ENCODE measurements at regions of chr16 and their contacts with region 1.

Region 1: GRCh38 chr16:53435066-53435688 is 906 bp downstream of the RBL2 start:
- DNase-seq: peak; percentile 39 to 90 (median 71)
- ATAC-seq: peak; percentile 59
- H3K4me3 ChIP-seq: peak overlapping the region; percentile 93 to 100
- H3K4me3 Mint-ChIP-seq: peak overlapping the region; percentile 94
- H3K27ac ChIP-seq: peak overlapping the region; percentile 92 to 94
- H3K27ac Mint-ChIP-seq: peak overlapping the region; percentile 99
- H3K4me1 ChIP-seq: peaks cover 36% of the 10 kb centered on the region
- H3K4me1 Mint-ChIP-seq: peaks cover 47% of the 10 kb centered on the region
- H3K27me3 ChIP-seq: no peaks in the 10 kb centered on the region
- H3K27me3 Mint-ChIP-seq: no peaks in the 10 kb centered on the region
- CTCF ChIP-seq: no peak

Region 2: DNA sequence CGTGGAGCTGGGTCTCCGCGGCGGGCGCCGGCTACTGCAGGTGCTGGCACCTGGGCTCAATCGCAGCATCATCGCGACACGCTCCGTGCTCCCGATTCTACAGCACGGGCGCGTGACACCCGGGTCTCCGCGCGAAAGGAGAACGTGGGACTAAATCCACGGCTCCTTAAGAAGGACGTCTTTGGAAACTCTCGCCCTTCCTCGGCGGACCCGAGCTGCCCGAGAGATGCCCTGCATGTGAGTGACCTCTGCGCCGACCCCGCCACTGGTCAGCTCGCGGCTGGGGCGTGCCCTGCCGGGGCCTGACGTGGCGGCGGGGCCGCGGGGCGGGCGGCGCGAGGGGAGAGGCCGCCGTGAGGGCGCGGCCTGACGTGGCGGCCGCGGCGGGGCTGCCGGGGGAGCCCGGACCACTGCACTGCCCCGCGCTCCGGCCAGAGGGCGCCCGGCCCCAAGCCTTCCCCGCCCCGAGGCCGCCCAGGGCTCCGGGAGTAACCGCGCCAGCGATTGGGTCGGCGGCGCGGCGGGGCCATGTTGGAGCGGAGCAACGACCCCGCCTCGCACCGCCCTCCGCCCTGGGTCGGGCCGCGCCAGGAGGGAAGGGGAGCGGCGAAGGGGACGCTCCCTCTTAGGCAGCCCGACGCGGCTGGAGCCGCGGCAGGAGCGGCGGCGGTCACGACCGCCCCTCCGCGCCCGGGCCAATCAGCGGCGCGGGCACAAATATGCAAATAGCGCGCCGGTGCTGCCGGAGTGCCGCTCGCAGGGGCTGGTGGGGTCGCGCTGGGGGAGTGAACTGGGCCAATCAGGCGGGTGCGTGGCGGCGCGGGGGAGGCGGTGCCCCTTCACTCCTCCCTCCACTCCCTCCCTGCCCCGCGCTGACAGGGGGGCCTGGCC is 304.8 kb before region 1 on chr16:
- CTCF ChIA-PET with region 1: no interaction called
- POLR2A ChIA-PET with region 1: no interaction called
- intact Hi-C with region 1: loop called (anchors 1 to 2 kb)
- DNase-seq: peak; percentile 88 to 97 (median 96)
- ATAC-seq: peak; percentile 91
- H3K4me3 ChIP-seq: peak overlapping the region; percentile 76 to 92
- H3K4me3 Mint-ChIP-seq: peak overlapping the region; percentile 84
- H3K27ac ChIP-seq: peak overlapping the region; percentile 52 to 66
- H3K27ac Mint-ChIP-seq: peak overlapping the region; percentile 86
- H3K4me1 ChIP-seq: no peaks in the 10 kb centered on the region
- H3K4me1 Mint-ChIP-seq: peaks cover 20% of the 10 kb centered on the region
- H3K27me3 ChIP-seq: no peaks in the 10 kb centered on the region
- H3K27me3 Mint-ChIP-seq: no peaks in the 10 kb centered on the region
- CTCF ChIP-seq: no peak

Region 3: DNA sequence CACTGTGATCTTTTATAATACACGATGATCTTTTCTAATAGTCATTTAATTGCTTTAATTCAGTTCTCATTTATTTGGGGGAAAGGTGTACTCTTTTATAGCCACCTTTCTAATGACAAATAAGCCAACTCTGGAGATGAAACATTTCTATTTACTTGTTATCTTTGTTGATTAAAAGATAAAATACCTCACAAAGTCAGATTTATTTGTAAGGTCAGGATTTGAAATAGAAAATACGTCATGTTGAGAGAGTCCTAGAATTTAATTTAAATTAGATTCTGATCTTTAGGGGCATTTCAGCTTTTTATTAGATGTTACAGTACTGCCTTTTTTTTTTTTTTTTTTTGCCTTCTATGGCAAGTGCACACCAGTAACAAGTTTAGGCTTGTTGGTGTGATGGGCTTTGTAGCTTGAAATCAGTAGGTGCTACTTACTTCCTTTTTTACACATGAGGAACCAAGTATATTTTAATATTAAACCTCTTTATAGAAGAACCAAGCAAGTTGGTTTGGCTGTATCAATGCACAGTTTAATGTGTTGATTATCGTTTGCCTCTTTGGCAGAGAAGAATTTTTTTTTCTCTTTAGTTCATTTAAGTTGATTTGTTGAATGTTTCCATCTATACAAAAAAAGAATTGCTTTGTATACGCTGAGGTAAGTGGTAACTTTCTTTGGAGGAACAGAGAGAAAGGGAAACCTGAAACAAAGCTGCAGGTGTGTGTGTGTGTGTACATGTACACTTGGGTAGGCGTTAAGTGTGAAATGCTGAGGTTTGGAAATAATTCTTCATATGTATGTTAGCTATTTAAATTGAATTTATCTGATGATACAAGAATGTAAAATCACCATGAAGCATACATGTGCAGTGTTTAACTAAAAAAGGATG is 14.7 kb after region 1 on chr16:
- CTCF ChIA-PET with region 1: interaction called, 28 read pairs
- POLR2A ChIA-PET with region 1: interaction called, 139 read pairs
- intact Hi-C with region 1: no loop called
- DNase-seq: peak in 2 of 9 experiments; percentile 22 to 47
- ATAC-seq: peak; percentile 39
- H3K4me3 ChIP-seq: peak overlapping the region; percentile 38 to 44
- H3K4me3 Mint-ChIP-seq: peak overlapping the region; percentile 88
- H3K27ac ChIP-seq: peak overlapping the region; percentile 33 to 45
- H3K27ac Mint-ChIP-seq: peak overlapping the region; percentile 90
- H3K4me1 ChIP-seq: peaks cover 64% of the 10 kb centered on the region
- H3K4me1 Mint-ChIP-seq: peaks cover 76% of the 10 kb centered on the region
- H3K27me3 ChIP-seq: no peaks in the 10 kb centered on the region
- H3K27me3 Mint-ChIP-seq: no peaks in the 10 kb centered on the region
- CTCF ChIP-seq: no peak

Region 4: DNA sequence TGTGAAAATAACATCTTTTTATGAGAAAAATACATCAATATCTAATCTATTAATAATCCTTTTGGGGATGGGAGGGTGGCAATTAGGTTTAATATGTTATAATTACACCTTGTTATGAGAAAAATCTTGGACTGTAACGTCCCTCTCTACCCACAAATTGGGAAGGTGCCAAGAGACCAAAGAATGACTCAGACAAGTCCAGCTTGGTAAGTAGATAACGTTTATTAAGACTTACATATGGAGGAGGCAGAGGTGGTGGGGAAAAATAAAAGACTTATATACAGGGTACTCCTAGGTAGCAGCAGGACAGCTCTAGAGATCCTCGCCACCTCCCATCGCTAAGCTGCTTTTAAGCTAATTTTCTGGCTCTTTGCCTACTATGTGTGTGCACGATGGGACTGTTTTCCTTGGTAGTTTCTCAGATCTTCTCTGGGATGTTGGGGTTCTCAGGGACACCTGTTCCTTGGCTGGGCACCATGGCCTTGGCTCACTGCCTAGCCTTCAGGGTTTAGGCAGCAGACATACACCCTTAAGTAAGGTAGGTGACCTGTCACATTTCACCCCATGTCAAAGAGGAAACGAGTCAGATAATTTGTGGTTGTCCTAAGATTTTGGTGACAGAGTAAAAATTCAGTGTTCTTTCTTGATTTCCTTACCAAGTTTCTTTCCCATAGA is 30.6 kb after region 1 on chr16:
- CTCF ChIA-PET with region 1: no interaction called
- POLR2A ChIA-PET with region 1: interaction called, 5 read pairs
- intact Hi-C with region 1: loop called (anchors 5 kb)
- DNase-seq: no peak
- ATAC-seq: no peak
- H3K4me3 ChIP-seq: no peak overlapping the region
- H3K4me3 Mint-ChIP-seq: peak overlapping the region; percentile 37
- H3K27ac ChIP-seq: peak overlapping the region in 1 of 2 experiments; percentile 21
- H3K27ac Mint-ChIP-seq: peak overlapping the region; percentile 88
- H3K4me1 ChIP-seq: peaks cover 56% of the 10 kb centered on the region
- H3K4me1 Mint-ChIP-seq: peaks cover 69% of the 10 kb centered on the region
- H3K27me3 ChIP-seq: no peaks in the 10 kb centered on the region
- H3K27me3 Mint-ChIP-seq: no peaks in the 10 kb centered on the region
- CTCF ChIP-seq: no peak

Region 5: GRCh38 chr16:53495325-53495724 is 60.1 kb after region 1 on chr16:
- CTCF ChIA-PET with region 1: interaction called, 3 read pairs
- POLR2A ChIA-PET with region 1: interaction called, 26 read pairs
- intact Hi-C with region 1: no loop called
- DNase-seq: no peak
- ATAC-seq: no peak
- H3K4me3 ChIP-seq: no peak overlapping the region
- H3K4me3 Mint-ChIP-seq: no peak overlapping the region
- H3K27ac ChIP-seq: no peak overlapping the region
- H3K27ac Mint-ChIP-seq: peak overlapping the region; percentile 71
- H3K4me1 ChIP-seq: peaks cover 25% of the 10 kb centered on the region
- H3K4me1 Mint-ChIP-seq: peaks cover 75% of the 10 kb centered on the region
- H3K27me3 ChIP-seq: no peaks in the 10 kb centered on the region
- H3K27me3 Mint-ChIP-seq: no peaks in the 10 kb centered on the region
- CTCF ChIP-seq: no peak

Region 6: GRCh38 chr16:53703590-53704444 is 268.6 kb after region 1 on chr16 and contains the starts of genes FTO and RPGRIP1L:
- CTCF ChIA-PET with region 1: no interaction called
- POLR2A ChIA-PET with region 1: no interaction called
- intact Hi-C with region 1: loop called (anchors 2 kb)
- DNase-seq: peak; percentile 89 to 98 (median 95)
- ATAC-seq: peak; percentile 90
- H3K4me3 ChIP-seq: peak within 1 kb of the TSS; percentile 75 to 86
- H3K4me3 Mint-ChIP-seq: peak within 1 kb of the TSS; percentile 96
- H3K27ac ChIP-seq: peak within 1 kb of the TSS; percentile 61 to 68
- H3K27ac Mint-ChIP-seq: peak within 1 kb of the TSS; percentile 95
- H3K4me1 ChIP-seq: peaks cover 21% of the 10 kb centered on the region
- H3K4me1 Mint-ChIP-seq: peaks cover 48% of the 10 kb centered on the region
- H3K27me3 ChIP-seq: no peaks in the 10 kb centered on the region
- H3K27me3 Mint-ChIP-seq: no peaks in the 10 kb centered on the region
- CTCF ChIP-seq: no peak
- total RNA-seq, gene FTO: 30.4 to 32.9 TPM
- total RNA-seq, gene RPGRIP1L: 1.5 to 2.2 TPM

Measured in CD8-positive, alpha-beta T cell (primary cell).